ENCODE measurements at regions of chr7 and their contacts with region 1.

Region 1: DNA sequence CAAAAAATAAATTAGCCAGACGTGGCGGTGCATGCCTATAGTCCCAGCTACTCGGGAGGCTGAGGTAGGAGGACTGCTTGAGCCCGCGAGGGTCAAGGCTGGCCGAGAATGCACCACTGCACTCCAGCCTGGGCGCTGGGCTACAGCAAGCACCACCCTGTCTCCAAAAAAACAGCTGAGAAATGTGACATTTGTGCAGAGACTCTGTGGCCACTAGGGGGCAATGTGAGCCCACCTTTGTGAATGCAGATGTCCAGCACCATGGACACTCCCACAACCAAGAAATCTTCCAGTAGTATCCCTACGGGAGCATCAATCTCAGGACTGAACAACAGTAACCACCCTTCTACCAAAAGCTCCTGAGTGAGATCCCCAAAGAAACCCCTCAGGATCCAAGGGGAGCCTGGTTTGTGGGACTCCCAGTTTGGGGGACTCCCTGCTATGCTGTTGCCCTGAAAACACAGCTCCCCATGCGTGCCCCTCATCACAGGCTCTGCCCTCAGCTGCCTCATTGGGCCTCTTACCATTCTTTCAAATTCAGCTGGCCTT is 6.2 kb upstream of the AHCYL2 start:
- DNase-seq: peak; percentile 50 to 90
- H3K4me3 ChIP-seq: no peak overlapping the region
- H3K27ac ChIP-seq: no peak overlapping the region
- H3K4me1 ChIP-seq: no peaks in the 10 kb centered on the region; a peak in 1 of 7 replicates
- H3K27me3 ChIP-seq: no peaks in the 10 kb centered on the region
- CTCF ChIP-seq: peak; percentile 78 to 96 (median 94)
- EP300 ChIP-seq: no peak
- POLR2A ChIP-seq: no peak
- RAD21 ChIP-seq: peak; percentile 98 to 99

Region 2: DNA sequence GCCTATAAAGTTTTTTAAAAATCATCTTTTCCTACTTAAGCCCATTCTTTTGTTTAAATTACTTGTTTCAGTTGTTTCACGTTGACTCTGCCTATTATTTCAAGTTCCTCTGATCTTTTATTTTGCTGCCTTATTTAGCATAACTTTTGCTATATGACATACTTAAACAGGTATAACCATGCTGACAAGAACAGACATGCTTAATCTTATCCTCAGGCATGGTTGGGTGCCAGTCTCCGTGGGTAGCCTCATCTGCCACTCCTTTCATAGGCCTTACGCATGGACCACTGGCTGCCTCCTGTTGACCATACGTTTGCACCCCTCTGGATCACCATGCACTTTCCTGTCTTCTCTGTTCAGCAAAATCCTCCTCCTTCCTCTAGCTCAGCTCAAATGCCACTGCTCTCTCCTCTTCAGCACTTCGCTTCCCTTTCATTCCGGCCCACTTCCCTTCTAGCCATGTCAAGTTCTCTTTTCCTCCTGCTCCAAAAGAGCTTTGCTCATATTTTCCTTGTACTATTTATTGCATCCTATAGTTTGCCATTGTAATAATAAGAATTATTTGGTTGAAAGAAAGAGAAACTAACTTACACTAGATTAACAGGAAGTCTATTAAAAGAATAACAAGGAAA is 84.1 kb before region 1 on chr7:
- CTCF ChIA-PET with region 1: no interaction called
- POLR2A ChIA-PET with region 1: no interaction called
- DNase-seq: no peak
- H3K4me3 ChIP-seq: no peak overlapping the region
- H3K27ac ChIP-seq: no peak overlapping the region
- H3K4me1 ChIP-seq: no peaks in the 10 kb centered on the region
- H3K27me3 ChIP-seq: no peaks in the 10 kb centered on the region
- CTCF ChIP-seq: no peak
- EP300 ChIP-seq: no peak
- POLR2A ChIP-seq: no peak
- RAD21 ChIP-seq: no peak

Region 3: GRCh38 chr7:129169171-129169671 is 49.4 kb before region 1 on chr7:
- CTCF ChIA-PET with region 1: interaction called, 258 read pairs
- POLR2A ChIA-PET with region 1: interaction called, 12 read pairs
- DNase-seq: peak in 1 of 2 experiments; percentile 84
- H3K4me3 ChIP-seq: peak overlapping the region; percentile 26 to 62 (median 50)
- H3K27ac ChIP-seq: peak overlapping the region; percentile 84
- H3K4me1 ChIP-seq: peaks cover 10 to 17% (median 12%) of the 10 kb centered on the region in 4 experiments
- H3K27me3 ChIP-seq: no peaks in the 10 kb centered on the region; a peak in 1 of 7 replicates
- CTCF ChIP-seq: no peak
- EP300 ChIP-seq: peak in 1 of 2 experiments; percentile 6; a peak in 1 of 3 replicates
- POLR2A ChIP-seq: peak; percentile 38 to 58
- RAD21 ChIP-seq: no peak

Region 4: DNA sequence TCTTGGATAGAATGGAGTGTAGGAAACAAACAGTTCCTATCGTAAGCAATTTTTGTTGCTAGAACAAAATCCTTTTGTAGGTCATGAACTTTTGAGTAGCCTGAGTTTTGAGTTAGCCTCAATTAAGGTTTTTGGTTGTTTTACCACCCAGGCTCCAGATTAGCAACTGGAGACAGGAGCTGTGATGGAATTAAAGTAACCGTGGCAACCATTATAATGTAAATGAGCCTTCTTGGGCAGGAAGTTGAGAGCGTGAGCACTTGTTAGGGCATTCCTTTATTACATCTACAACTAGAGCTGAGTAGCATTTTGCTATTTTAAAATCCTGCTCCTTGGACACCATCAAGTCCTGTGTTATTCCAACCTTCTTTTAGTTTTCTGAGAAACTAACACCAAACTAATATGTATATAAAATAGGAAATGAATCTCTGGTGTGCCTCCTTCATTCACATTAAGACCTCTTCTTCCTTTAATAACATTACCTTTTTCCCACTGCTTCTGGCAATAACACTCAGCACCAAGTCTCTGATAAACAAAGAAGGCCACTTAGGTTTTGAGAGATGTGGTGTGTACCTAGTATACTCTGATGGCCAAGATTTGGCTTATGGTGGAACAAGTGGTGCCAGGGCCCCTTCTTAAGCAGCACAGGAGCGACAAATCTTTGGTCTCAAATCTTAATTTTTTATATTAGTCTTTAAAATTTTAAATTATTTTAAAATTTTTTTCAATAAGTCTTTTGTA is 40.2 kb after region 1 on chr7:
- CTCF ChIA-PET with region 1: interaction called, 10 read pairs
- POLR2A ChIA-PET with region 1: interaction called, 4 read pairs
- DNase-seq: peak in 1 of 2 experiments; percentile 39
- H3K4me3 ChIP-seq: peak overlapping the region in 2 of 4 experiments; percentile 8 to 49; a peak in 3 of 8 replicates
- H3K27ac ChIP-seq: peak overlapping the region; percentile 83
- H3K4me1 ChIP-seq: peaks cover 0 to 21% (median 11%) of the 10 kb centered on the region in 4 experiments; a peak in 6 of 7 replicates
- H3K27me3 ChIP-seq: no peaks in the 10 kb centered on the region
- CTCF ChIP-seq: no peak
- EP300 ChIP-seq: peak in 1 of 2 experiments; percentile 70; a peak in 1 of 3 replicates
- POLR2A ChIP-seq: peak in 1 of 2 experiments; percentile 47; a peak in 2 of 3 replicates
- RAD21 ChIP-seq: no peak

Region 5: DNA sequence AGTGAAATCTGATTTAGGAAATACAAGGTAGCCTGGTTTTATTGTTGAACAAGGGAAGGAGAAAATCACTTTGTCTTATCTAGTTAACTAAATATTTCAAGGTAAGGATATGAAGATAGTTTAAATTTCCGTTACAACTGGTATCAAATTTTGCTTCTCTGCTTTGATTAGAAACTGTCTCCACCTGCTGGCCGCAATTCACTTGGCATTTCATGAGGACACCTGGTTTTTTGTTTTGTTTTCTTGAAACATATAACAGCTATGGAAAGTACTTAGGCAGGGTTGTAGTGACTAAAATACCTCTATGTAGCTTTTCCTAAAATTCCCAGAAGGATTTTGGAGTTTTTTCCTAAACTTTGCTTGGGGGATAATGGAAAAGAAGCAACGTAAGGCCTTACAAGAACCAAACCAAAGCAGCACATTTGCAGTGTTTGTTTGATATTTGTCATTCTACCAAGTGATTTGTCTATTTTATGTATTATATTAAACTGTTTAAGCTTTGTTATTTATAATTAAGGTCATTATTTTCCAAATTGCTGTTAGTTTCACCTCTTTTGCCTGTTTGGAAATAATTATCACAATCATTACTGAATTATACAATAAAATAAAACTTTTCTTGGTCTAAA is 79.8 kb after region 1 on chr7:
- CTCF ChIA-PET with region 1: interaction called, 78 read pairs
- POLR2A ChIA-PET with region 1: interaction called, 5 read pairs
- DNase-seq: no peak
- H3K4me3 ChIP-seq: no peak overlapping the region
- H3K27ac ChIP-seq: no peak overlapping the region
- H3K4me1 ChIP-seq: no peaks in the 10 kb centered on the region
- H3K27me3 ChIP-seq: no peaks in the 10 kb centered on the region
- CTCF ChIP-seq: peak in 2 of 3 experiments; percentile 68 to 73; a peak in 3 of 4 replicates
- EP300 ChIP-seq: no peak
- POLR2A ChIP-seq: no peak
- RAD21 ChIP-seq: peak; percentile 71 to 74

Region 6: DNA sequence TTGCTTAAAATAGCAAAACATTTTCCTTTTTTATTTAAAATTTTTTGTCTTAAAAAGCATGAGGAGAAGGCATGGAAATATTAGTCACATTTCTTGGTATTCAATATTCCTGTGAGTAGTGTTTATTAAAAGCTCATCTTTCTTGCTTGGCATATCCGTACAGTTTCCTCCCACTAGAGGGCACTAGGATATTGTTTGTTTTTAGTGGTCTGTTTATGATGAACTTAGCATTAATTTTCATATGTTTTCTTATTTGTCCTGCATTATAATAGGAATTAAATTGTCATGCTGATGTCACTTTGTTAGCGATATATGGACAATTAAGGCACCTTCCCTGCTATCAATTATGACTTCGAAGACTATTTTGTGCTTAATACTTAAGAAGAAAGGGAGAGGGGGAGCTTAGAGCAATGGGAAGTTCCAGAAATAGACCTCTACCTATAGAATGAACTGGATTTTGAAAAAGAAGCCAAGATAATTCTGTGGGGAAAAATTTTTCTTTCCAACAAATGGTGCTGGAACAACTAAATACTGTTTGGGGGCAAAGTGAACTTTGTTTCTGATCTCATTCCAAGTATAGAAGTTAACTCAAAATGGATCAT is 124.6 kb after region 1 on chr7:
- CTCF ChIA-PET with region 1: interaction called, 13 read pairs
- POLR2A ChIA-PET with region 1: no interaction called
- DNase-seq: no peak
- H3K4me3 ChIP-seq: no peak overlapping the region
- H3K27ac ChIP-seq: no peak overlapping the region
- H3K4me1 ChIP-seq: peaks cover 0 to 12% (median 2%) of the 10 kb centered on the region in 4 experiments; a peak in 2 of 7 replicates
- H3K27me3 ChIP-seq: no peaks in the 10 kb centered on the region
- CTCF ChIP-seq: peak in 1 of 3 experiments; percentile 53; a peak in 2 of 4 replicates
- EP300 ChIP-seq: no peak
- POLR2A ChIP-seq: no peak
- RAD21 ChIP-seq: peak; percentile 37 to 51

Region 7: GRCh38 chr7:129376076-129376777 is 157.6 kb after region 1 on chr7:
- CTCF ChIA-PET with region 1: interaction called, 64 read pairs
- POLR2A ChIA-PET with region 1: no interaction called
- DNase-seq: no peak
- H3K4me3 ChIP-seq: peak overlapping the region in 1 of 4 experiments; percentile 31; a peak in 1 of 8 replicates
- H3K27ac ChIP-seq: no peak overlapping the region
- H3K4me1 ChIP-seq: peaks cover 6 to 17% (median 9%) of the 10 kb centered on the region in 4 experiments; a peak in 5 of 7 replicates
- H3K27me3 ChIP-seq: no peaks in the 10 kb centered on the region
- CTCF ChIP-seq: peak; percentile 28 to 70 (median 49); a peak in 3 of 4 replicates
- EP300 ChIP-seq: no peak
- POLR2A ChIP-seq: no peak
- RAD21 ChIP-seq: peak; percentile 30 to 44; a peak in 3 of 4 replicates

Measured in H1 (cell line).